ENCODE measurements at regions of chr7 and their contacts with region 1.

Region 1: DNA sequence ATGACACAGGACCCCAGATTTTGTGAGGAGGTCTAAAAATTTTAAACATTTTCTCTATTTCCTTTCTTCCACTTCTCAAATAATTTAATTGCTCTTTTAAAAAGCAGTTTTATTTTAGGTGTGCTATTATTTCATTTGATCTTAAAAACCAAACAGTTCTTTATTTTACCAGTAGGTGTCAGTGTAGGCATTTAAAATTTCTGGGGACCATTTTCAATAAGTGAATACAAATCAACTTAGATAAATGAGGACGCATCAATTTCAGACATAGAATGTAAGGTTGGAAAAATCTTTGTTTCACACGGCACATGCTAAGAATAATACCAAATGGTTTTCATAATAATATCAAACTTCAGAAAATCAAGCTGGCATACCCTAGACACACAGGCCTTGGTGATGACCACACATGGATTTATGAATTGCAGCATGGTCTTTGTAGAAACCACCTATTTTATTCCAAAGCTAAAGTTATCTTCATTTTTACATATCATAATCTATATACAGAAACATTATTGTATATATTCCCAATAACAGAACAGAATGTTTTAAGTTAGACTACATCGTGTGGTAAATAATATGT is 127.6 kb upstream of the SLC26A5 start:
- DNase-seq: no peak
- ATAC-seq: no peak

Region 2: GRCh38 chr7:103879411-103879810 is 305.8 kb after region 1 on chr7:
- intact Hi-C with region 1: no loop called
- DNase-seq: no peak
- ATAC-seq: no peak

Region 3: GRCh38 chr7:104156842-104157277 is 583.3 kb after region 1 on chr7:
- intact Hi-C with region 1: loop called (anchors 10 kb)
- DNase-seq: no peak
- ATAC-seq: no peak